Left cardiac atrium (tissue), 4 donors: ENCODE measurements at regions of chr12 and their contacts with region 1.

Region 1: DNA sequence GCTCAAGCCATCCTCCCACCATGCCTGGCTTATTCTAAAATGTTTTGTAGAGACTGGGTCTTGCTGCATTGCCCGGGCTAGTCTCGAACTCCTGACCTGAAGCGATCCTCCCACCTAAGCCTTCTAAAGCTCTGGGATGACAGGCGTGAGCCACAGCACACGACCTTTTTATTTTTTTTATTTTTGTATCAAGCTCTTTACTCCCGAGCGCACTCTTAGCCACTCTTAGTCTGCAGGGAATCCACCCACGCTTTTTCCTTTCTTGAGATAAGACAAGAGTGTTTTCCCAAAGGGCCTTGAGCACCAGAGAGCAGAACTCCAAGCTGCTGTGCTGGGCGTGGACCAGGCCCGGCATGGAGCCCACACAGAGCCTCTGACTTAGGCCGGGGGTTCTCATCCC is 23.4 kb downstream of the MAP1LC3B2 start:
- DNase-seq: peak; percentile 66
- ATAC-seq: peak; percentile 95 to 96

Region 2: GRCh38 chr12:116455540-116456329 is 126.9 kb before region 1 on chr12:
- intact Hi-C with region 1: loop called in 1 of 2 experiments (anchors 10 kb)
- DNase-seq: peak; percentile 86
- ATAC-seq: peak; percentile 83 to 91

Region 3: GRCh38 chr12:116568203-116568602 is 14.4 kb before region 1 on chr12:
- intact Hi-C with region 1: loop called in 1 of 2 experiments (anchors 1 kb)
- DNase-seq: no peak
- ATAC-seq: no peak